CD4-positive, alpha-beta T cell (primary cell): ENCODE measurements at regions of chr20 and their contacts with region 1.

Region 1: DNA sequence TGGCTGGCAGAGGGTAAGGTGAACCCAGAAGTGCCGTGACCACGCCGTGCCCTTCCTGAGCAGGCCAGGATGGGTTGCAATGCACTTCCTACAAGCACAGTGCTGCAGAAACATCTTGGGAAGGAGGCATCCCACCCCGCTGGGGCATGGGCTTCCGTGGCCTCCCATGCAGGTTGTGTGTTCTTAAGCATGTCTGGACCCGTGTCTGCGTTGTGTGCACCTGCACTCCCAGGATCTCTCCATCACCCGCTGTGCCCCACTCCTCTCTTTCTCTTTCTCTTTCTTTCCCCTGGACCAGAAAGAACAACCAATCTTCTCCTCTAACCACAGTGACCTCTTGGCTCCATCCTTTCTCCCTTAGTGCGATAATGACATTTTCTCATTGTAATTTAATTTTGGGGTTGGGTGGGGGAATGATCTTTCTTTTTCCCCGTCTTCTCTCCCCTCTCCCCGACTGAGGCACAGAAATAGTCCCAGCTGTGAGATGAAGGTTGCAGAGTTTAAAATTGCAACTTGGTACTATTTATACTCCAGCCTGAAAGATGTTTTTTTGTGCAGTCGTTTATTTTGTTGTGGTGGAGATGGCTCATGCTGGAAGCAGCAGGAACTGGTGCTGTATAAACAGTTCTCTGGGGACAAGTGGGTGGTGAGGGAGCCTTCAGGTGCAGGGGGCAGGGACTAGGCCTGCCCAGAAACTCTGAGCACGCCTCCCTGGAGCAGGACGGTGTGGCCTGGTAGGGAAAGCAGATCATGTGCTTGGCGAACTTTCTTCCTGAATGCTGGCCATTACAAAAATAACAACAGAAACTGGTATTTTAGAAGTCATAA is 20.5 kb downstream of the BCAS4 start:
- DNase-seq: peak in 2 of 14 experiments; percentile 9 to 30
- ATAC-seq: peak; percentile 15
- H3K4me3 ChIP-seq: peak overlapping the region; percentile 7
- H3K4me3 Mint-ChIP-seq: peak overlapping the region; percentile 66
- H3K27ac ChIP-seq: no peak overlapping the region
- H3K27ac Mint-ChIP-seq: peak overlapping the region; percentile 87
- H3K4me1 ChIP-seq: peaks cover 34% of the 10 kb centered on the region
- H3K4me1 Mint-ChIP-seq: peaks cover 48% of the 10 kb centered on the region
- H3K27me3 ChIP-seq: no peaks in the 10 kb centered on the region
- H3K27me3 Mint-ChIP-seq: no peaks in the 10 kb centered on the region
- CTCF ChIP-seq: no peak

Region 2: DNA sequence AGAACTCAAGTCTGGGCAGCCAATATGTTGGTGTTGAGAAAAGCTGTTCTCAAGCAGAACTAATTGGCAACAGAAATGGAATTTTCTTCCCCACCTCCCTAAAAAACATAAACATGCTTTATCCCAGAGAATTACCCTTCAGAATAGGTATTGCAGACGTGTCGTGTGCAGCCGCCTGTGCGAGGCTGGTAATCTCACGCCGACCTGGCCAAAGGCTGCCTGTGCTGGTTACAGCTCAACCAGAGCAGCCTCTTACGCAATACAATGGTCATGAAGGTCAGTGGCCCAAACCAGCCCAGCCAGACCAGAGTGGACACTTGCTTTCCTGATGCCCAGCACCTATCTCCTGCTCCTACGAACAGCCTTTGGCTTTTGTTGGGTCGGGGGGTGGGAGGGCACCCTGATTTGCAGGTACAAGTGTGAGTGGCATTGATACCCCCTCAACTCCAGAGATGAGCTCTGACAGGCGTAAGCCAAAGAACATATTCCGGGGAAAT is 134.9 kb before region 1 on chr20:
- CTCF ChIA-PET with region 1: no interaction called
- POLR2A ChIA-PET with region 1: no interaction called
- intact Hi-C with region 1: no loop called
- DNase-seq: no peak
- ATAC-seq: no peak
- H3K4me3 ChIP-seq: no peak overlapping the region
- H3K4me3 Mint-ChIP-seq: no peak overlapping the region
- H3K27ac ChIP-seq: no peak overlapping the region
- H3K27ac Mint-ChIP-seq: no peak overlapping the region
- H3K4me1 ChIP-seq: no peaks in the 10 kb centered on the region
- H3K4me1 Mint-ChIP-seq: no peaks in the 10 kb centered on the region
- H3K27me3 ChIP-seq: no peaks in the 10 kb centered on the region
- H3K27me3 Mint-ChIP-seq: peaks cover 5% of the 10 kb centered on the region
- CTCF ChIP-seq: no peak

Region 3: GRCh38 chr20:50958615-50959542 is 143.5 kb after region 1 on chr20 and contains the start of gene MOCS3:
- CTCF ChIA-PET with region 1: interaction called, 3 read pairs
- POLR2A ChIA-PET with region 1: interaction called, 8 read pairs
- intact Hi-C with region 1: loop called in 1 of 2 experiments (anchors 5 kb)
- DNase-seq: peak; percentile 70 to 96 (median 76)
- ATAC-seq: peak; percentile 81
- H3K4me3 ChIP-seq: peak within 1 kb of the TSS; percentile 94
- H3K4me3 Mint-ChIP-seq: peak within 1 kb of the TSS; percentile 94
- H3K27ac ChIP-seq: peak within 1 kb of the TSS; percentile 82 to 99
- H3K27ac Mint-ChIP-seq: peak within 1 kb of the TSS; percentile 96
- H3K4me1 ChIP-seq: peaks cover 34% of the 10 kb centered on the region
- H3K4me1 Mint-ChIP-seq: peaks cover 62% of the 10 kb centered on the region
- H3K27me3 ChIP-seq: no peaks in the 10 kb centered on the region
- H3K27me3 Mint-ChIP-seq: no peaks in the 10 kb centered on the region
- CTCF ChIP-seq: no peak
- total RNA-seq, gene MOCS3: 2.7 to 3.0 TPM